Right lobe of liver (tissue), 6 donors: ENCODE measurements at regions of chr19 and their contacts with region 1.

Region 1: GRCh38 chr19:46016426-46017094 is 6.3 kb downstream of the PGLYRP1 start:
- DNase-seq: peak; percentile 84 to 87 (median 84)
- ATAC-seq: peak; percentile 86 to 94 (median 90)
- H3K4me3 ChIP-seq: peak overlapping the region; percentile 48 to 58 (median 53)
- H3K27ac ChIP-seq: no peak overlapping the region
- H3K4me1 ChIP-seq: peaks cover 0 to 21% (median 0%) of the 10 kb centered on the region in 4 donors
- H3K27me3 ChIP-seq: peaks cover 0 to 11% of the 10 kb centered on the region in 2 donors
- CTCF ChIP-seq: peak; percentile 57 to 90 (median 88)
- POLR2A ChIP-seq: no peak

Region 2: GRCh38 chr19:45824041-45824471 is 192.5 kb before region 1 on chr19:
- intact Hi-C with region 1: loop called in 1 of 2 experiments (anchors 10 kb)
- DNase-seq: no peak
- ATAC-seq: no peak
- H3K4me3 ChIP-seq: no peak overlapping the region
- H3K27ac ChIP-seq: no peak overlapping the region
- H3K4me1 ChIP-seq: no peaks in the 10 kb centered on the region
- H3K27me3 ChIP-seq: no peaks in the 10 kb centered on the region
- CTCF ChIP-seq: no peak
- POLR2A ChIP-seq: no peak

Region 3: DNA sequence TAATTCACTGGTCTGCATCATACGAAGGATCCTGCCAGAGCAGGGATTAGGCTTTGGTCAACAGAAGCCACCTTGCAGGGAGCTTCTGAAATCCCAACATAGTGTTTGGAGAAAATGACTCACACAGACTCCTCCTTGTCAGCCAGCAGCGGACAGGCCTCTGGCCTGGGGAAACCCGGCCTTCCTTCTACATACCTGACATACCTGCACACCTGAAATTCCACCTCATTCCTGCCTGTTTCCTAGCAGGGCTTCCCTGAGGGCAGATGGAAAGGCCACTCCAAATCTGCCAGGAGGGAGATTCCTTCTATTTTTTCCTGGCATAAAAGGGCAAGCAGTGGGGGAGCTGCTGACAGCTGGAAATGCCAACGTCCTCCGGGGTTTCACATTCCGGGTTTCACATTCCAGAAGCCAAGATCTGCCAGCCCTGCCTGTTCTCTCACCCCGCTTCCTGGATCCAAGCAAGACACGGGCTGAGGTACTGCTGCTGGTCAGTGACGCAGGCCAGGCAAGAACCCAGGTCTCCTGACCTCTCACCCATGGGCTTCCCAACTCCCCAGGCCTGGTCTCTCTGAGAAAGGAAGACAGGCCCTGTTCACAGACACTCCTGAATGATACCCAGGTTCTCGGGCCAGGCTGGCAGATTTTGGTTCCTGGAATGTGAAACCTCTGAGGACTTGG is 194.8 kb after region 1 on chr19:
- intact Hi-C with region 1: no loop called
- DNase-seq: no peak
- ATAC-seq: peak in 1 of 4 donors; percentile 18
- H3K4me3 ChIP-seq: no peak overlapping the region
- H3K27ac ChIP-seq: peak overlapping the region in 1 of 3 donors; percentile 3
- H3K4me1 ChIP-seq: no peaks in the 10 kb centered on the region
- H3K27me3 ChIP-seq: no peaks in the 10 kb centered on the region
- CTCF ChIP-seq: no peak
- POLR2A ChIP-seq: no peak